Breast epithelium (tissue), 4 donors: ENCODE measurements at regions of chr1 and their contacts with region 1.

Region 1: GRCh38 chr1:192998536-192998935 is 60.6 kb downstream of the UCHL5 start:
- DNase-seq: no peak
- H3K4me3 ChIP-seq: no peak overlapping the region
- H3K27ac ChIP-seq: no peak overlapping the region
- H3K4me1 ChIP-seq: no peaks in the 10 kb centered on the region
- H3K27me3 ChIP-seq: no peaks in the 10 kb centered on the region
- CTCF ChIP-seq: no peak
- POLR2A ChIP-seq: no peak

Region 2: DNA sequence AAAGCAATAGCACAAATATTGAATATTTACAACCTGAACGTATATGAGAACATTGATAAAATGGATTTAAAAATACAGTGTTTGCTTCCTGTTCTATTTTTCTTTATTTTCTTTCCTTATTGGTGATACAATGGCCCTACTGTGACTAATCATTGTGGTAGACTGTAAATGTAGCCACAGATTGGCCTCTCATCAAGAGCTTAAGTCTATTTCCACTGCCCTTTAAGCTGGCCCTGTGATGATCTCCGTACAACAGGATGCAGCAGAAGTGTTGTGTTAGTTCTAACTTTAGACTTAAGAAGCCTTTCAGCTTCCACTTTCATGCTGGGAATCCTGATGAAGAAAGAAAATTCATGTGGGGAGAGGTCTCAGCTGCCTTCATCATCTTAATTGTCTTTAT is 473.4 kb after region 1 on chr1:
- intact Hi-C with region 1: loop called (anchors 5 kb)
- DNase-seq: no peak
- H3K4me3 ChIP-seq: no peak overlapping the region
- H3K27ac ChIP-seq: no peak overlapping the region
- H3K4me1 ChIP-seq: no peaks in the 10 kb centered on the region
- H3K27me3 ChIP-seq: no peaks in the 10 kb centered on the region
- CTCF ChIP-seq: no peak
- POLR2A ChIP-seq: no peak